H1 (cell line): ENCODE measurements at regions of chr3 and their contacts with region 1.

Region 1: GRCh38 chr3:160225176-160226025 is at the start of gene C3orf80:
- DNase-seq: peak in 1 of 2 experiments; percentile 85
- H3K4me3 ChIP-seq: peak within 1 kb of the TSS; percentile 46 to 66 (median 55)
- H3K27ac ChIP-seq: no peak within 1 kb of the TSS
- H3K4me1 ChIP-seq: peaks cover 3 to 14% (median 6%) of the 10 kb centered on the region in 4 experiments
- H3K27me3 ChIP-seq: peaks cover 18 to 44% (median 34%) of the 10 kb centered on the region in 4 experiments
- CTCF ChIP-seq: peak in 2 of 3 experiments; percentile 16 to 20; a peak in 2 of 4 replicates
- EP300 ChIP-seq: no peak
- POLR2A ChIP-seq: no peak
- RAD21 ChIP-seq: peak; percentile 12 to 25; a peak in 3 of 4 replicates
- total RNA-seq, gene C3orf80: 1.1 TPM in 2 replicates

Region 2: GRCh38 chr3:160106905-160107861 is 118.2 kb before region 1 on chr3:
- CTCF ChIA-PET with region 1: no interaction called
- POLR2A ChIA-PET with region 1: no interaction called
- DNase-seq: no peak
- H3K4me3 ChIP-seq: no peak overlapping the region
- H3K27ac ChIP-seq: no peak overlapping the region
- H3K4me1 ChIP-seq: no peaks in the 10 kb centered on the region
- H3K27me3 ChIP-seq: no peaks in the 10 kb centered on the region
- CTCF ChIP-seq: no peak
- EP300 ChIP-seq: no peak
- POLR2A ChIP-seq: no peak
- RAD21 ChIP-seq: no peak

Region 3: GRCh38 chr3:160384639-160385312 is 159.4 kb after region 1 on chr3:
- CTCF ChIA-PET with region 1: no interaction called
- POLR2A ChIA-PET with region 1: no interaction called
- DNase-seq: no peak
- H3K4me3 ChIP-seq: no peak overlapping the region
- H3K27ac ChIP-seq: no peak overlapping the region; the same call in 1 of the 2 replicates
- H3K4me1 ChIP-seq: peaks cover 0 to 6% (median 1%) of the 10 kb centered on the region in 4 experiments; a peak in 3 of 7 replicates
- H3K27me3 ChIP-seq: no peaks in the 10 kb centered on the region
- CTCF ChIP-seq: no peak
- EP300 ChIP-seq: no peak
- POLR2A ChIP-seq: no peak
- RAD21 ChIP-seq: no peak

Region 4: DNA sequence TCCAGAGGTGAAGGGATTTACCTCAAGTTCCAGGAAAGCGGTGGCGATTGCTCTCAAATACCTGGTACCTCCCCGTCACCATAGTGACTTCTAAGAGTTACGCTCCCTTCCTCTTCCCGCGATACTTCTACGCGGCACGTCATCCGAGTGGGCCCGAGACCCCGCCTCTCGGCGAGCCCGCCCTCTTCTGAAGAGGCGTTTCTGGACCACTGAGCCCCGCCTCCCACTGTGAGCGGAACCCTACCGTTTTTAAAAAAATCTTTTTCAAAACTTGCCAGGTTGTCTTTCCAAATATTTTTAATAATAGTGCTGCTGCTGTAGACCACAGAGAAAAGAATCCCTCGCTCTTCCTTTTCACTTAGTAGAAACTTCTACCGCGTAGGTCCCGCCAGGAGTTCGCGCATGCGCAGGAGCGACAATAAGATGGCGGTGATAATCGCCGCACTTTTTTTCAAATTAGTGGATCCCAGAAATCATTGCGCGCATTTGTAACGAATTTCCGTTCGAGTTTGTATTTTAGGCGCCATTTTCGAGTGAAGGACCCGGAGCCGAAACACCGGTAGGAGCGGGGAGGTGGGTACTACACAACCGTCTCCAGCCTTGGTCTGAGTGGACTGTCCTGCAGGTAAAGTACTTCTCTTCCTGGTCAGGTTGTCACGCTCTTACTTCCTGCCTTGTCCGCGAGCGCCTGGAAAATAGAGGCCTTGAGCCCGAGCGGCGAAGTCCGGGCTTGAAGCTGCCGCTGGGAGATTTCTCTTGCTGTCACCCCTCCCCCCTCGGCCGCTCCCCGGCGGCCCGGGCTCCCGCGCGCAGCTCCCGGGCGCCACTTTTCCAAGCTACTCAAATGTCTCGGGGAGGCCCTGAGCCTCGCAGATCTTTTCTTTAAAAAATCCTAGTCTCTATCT is 174.0 kb after region 1 on chr3 and contains the starts of genes IFT80 and SMC4:
- CTCF ChIA-PET with region 1: no interaction called
- POLR2A ChIA-PET with region 1: interaction called, 13 read pairs
- DNase-seq: peak; percentile 76 to 93
- H3K4me3 ChIP-seq: peak within 1 kb of the TSS; percentile 84 to 99 (median 92)
- H3K27ac ChIP-seq: peak within 1 kb of the TSS; percentile 97
- H3K4me1 ChIP-seq: no peaks in the 10 kb centered on the region; a peak in 3 of 7 replicates
- H3K27me3 ChIP-seq: no peaks in the 10 kb centered on the region
- CTCF ChIP-seq: no peak
- EP300 ChIP-seq: no peak
- POLR2A ChIP-seq: peak; percentile 85 to 93
- RAD21 ChIP-seq: no peak; a peak in 1 of 4 replicates
- total RNA-seq, gene IFT80: 22.4 and 25.9 TPM in 2 replicates
- total RNA-seq, gene SMC4: 118 and 129 TPM in 2 replicates